ENCODE measurements at regions of chr19 and their contacts with region 1.

Region 1: DNA sequence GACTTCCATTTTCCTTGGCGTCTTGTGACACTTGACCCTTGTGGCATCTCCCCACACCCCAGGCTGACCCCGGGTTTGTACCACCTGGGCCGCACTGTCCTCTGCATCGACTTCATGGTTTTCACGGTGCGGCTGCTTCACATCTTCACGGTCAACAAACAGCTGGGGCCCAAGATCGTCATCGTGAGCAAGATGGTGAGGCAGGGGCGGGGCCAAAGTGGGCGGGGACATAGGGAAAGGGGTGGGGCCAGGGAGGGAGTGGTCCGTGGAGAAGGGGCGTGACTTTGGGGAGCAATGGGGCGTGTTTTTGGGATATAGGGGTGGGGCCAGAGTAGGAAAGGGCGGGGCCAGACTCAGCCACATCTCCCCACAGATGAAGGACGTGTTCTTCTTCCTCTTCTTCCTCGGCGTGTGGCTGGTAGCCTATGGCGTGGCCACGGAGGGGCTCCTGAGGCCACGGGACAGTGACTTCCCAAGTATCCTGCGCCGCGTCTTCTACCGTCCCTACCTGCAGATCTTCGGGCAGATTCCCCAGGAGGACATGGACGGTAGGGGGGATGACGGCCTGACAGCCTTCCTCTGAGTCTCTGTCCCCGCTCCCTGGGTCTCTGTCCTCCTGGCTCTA is 42.8 kb downstream of the TRPM4 start:
- DNase-seq: no peak
- H3K4me3 ChIP-seq: no peak overlapping the region
- H3K27ac ChIP-seq: no peak overlapping the region
- H3K27me3 ChIP-seq: no peaks in the 10 kb centered on the region
- CTCF ChIP-seq: no peak

Region 2: GRCh38 chr19:49118565-49119410 is 81.6 kb before region 1 on chr19 and contains the start of gene C19orf73:
- CTCF ChIA-PET with region 1: interaction called, 10 read pairs
- POLR2A ChIA-PET with region 1: no interaction called
- DNase-seq: peak; percentile 81
- H3K4me3 ChIP-seq: peak within 1 kb of the TSS; percentile 73
- H3K27ac ChIP-seq: peak within 1 kb of the TSS; percentile 77
- H3K27me3 ChIP-seq: peaks cover 2% of the 10 kb centered on the region
- CTCF ChIP-seq: peak; percentile 10; the same call in 1 of the 2 replicates
- polyA plus RNA-seq, gene C19orf73: 0.36 and 0.50 TPM in 2 replicates

Region 3: GRCh38 chr19:49145573-49146407 is 54.6 kb before region 1 on chr19:
- CTCF ChIA-PET with region 1: interaction called, 13 read pairs
- POLR2A ChIA-PET with region 1: no interaction called
- DNase-seq: no peak
- H3K4me3 ChIP-seq: peak overlapping the region; percentile 47
- H3K27ac ChIP-seq: no peak overlapping the region
- H3K27me3 ChIP-seq: no peaks in the 10 kb centered on the region
- CTCF ChIP-seq: peak; percentile 82

Region 4: DNA sequence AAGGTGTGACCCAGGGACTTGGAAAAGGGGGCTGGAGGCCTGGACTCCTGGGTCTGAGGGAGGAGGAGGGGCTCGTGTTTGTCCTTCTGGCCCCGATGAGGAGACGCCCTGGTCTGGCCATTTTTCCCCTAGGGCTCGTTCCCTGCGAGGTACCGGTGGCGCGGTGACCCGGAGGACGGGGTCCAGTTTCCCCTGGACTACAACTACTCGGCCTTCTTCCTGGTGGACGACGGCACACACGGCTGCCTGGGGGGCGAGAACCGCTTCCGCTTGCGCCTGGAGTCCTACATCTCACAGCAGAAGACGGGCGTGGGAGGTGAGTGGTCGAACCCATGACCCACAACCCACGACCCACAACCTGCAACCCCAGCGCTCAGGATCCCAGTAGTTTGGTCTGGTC is 31.9 kb before region 1 on chr19:
- CTCF ChIA-PET with region 1: interaction called, 24 read pairs
- POLR2A ChIA-PET with region 1: no interaction called
- DNase-seq: no peak
- H3K4me3 ChIP-seq: no peak overlapping the region
- H3K27ac ChIP-seq: no peak overlapping the region
- H3K27me3 ChIP-seq: no peaks in the 10 kb centered on the region
- CTCF ChIP-seq: no peak

Region 5: DNA sequence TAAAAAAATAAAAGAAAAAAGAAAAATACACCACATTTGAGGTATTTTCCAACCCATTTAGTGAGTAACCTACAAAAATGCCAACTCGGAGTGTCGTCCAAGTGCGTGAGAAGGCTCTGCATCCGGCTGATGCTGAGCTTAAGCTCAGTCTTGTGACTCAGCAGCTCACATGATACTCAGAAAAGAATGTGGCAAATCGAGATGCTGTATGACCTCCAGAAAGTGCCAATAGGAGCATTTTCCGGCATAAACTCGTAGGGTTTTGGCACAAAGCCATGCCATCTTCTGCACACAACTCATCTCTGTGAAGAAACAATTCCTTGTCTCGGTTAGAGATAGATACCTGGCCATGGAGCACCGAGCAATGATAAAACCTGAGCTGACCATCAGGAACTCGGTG is 15.7 kb after region 1 on chr19:
- CTCF ChIA-PET with region 1: interaction called, 35 read pairs
- POLR2A ChIA-PET with region 1: no interaction called
- DNase-seq: no peak
- H3K4me3 ChIP-seq: no peak overlapping the region
- H3K27ac ChIP-seq: no peak overlapping the region
- H3K27me3 ChIP-seq: no peaks in the 10 kb centered on the region
- CTCF ChIP-seq: no peak

Measured in AG04450 (cell line).